ENCODE measurements at regions of chr11 and their contacts with region 1.

Region 1: GRCh38 chr11:65888163-65888814 is at the start of gene FIBP:
- DNase-seq: peak; percentile 97
- H3K4me3 Mint-ChIP-seq: peak within 1 kb of the TSS; percentile 90
- H3K27ac Mint-ChIP-seq: peak within 1 kb of the TSS; percentile 90
- H3K4me1 Mint-ChIP-seq: peaks cover 28% of the 10 kb centered on the region
- H3K27me3 Mint-ChIP-seq: no peaks in the 10 kb centered on the region
- CTCF ChIP-seq: peak; percentile 84
- total RNA-seq, gene FIBP: 79.8 and 80.8 TPM in 2 replicates

Region 2: DNA sequence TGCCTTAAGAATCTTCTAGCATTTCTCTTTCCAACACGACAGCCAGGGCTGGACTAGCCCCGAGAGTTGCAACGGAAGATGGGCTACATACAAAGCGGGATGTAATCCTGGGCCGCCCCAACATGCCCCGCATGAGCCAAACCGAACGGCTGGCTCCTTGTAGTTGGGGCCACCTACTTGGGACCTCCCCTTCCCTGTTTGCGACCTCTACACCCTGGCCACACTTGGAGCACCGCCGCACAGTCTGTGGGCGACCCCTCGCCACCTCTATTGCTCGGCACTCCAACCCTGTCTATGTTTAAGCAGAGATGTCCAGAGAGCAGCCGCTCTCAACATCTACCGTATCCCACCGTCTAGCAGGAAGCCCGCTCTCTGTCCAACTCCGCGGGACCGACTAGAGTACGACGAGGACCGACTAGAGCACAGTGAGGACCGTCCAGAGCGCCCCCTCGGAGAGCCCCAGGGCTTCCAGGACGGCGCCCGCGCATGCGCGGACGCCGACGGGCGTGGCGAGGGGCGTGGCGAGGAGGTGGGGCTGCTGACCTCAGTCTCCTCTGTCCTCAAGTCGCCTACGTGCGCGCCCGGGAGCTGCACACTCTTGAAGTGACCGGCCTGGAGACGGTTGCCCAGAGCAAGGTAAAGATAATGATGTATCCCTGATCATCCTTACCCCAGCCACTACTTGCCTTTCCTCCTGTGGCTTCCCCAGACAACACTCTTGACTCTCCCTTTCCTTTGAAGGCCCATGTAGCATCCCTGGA is 433.4 kb before region 1 on chr11:
- CTCF ChIA-PET with region 1: no interaction called
- POLR2A ChIA-PET with region 1: no interaction called
- intact Hi-C with region 1: no loop called
- DNase-seq: no peak
- H3K4me3 Mint-ChIP-seq: peak overlapping the region; percentile 66
- H3K27ac Mint-ChIP-seq: peak overlapping the region; percentile 27
- H3K4me1 Mint-ChIP-seq: peaks cover 9% of the 10 kb centered on the region
- H3K27me3 Mint-ChIP-seq: no peaks in the 10 kb centered on the region
- CTCF ChIP-seq: no peak

Region 3: GRCh38 chr11:65662799-65663638 is 225.3 kb before region 1 on chr11 and contains the start of gene RELA:
- CTCF ChIA-PET with region 1: interaction called, 3 read pairs
- POLR2A ChIA-PET with region 1: interaction called, 14 read pairs
- intact Hi-C with region 1: no loop called
- DNase-seq: peak; percentile 91
- H3K4me3 Mint-ChIP-seq: peak within 1 kb of the TSS; percentile 74
- H3K27ac Mint-ChIP-seq: peak within 1 kb of the TSS; percentile 73
- H3K4me1 Mint-ChIP-seq: peaks cover 12% of the 10 kb centered on the region
- H3K27me3 Mint-ChIP-seq: no peaks in the 10 kb centered on the region
- CTCF ChIP-seq: no peak
- total RNA-seq, gene RELA: 82.1 and 83.0 TPM in 2 replicates

Region 4: DNA sequence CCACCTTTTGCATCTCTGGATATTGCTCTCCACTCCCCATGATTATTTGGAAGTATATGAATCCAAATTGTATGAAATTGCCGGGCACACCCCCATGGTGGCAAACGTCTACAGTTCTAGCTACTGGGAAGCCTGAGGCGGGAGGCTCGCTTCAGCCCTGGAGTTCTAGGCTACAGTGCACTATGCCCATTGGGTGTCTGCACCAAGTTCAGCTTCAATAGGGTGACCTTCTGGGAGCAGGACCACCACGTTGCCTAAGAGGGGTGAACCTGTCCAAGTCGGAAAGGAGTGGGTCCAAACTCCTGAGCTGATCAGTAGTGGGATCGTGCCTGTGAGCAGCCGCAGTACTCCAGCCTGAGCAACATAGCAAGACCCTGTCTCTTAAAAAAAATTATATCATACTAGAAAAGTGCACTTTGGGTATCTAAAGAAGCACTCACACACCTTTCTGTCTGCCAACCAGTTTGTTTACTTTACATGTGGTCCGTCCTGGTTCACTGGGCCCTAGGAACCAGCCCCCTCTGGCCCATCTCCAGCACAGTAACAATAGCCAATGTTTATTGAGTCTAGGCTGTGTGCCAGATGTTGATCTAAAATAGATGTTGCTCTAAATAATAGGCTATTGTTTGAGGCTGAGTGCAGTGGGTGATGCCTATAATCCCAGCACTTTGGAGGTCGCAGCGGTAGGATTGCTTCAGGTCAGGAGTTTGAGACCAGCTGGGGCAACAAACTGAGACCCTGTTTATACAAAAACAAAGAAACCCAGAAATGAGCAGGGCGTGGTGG is 192.6 kb before region 1 on chr11:
- CTCF ChIA-PET with region 1: no interaction called
- POLR2A ChIA-PET with region 1: no interaction called
- intact Hi-C with region 1: no loop called
- DNase-seq: peak; percentile 61
- H3K4me3 Mint-ChIP-seq: no peak overlapping the region
- H3K27ac Mint-ChIP-seq: no peak overlapping the region
- H3K4me1 Mint-ChIP-seq: no peaks in the 10 kb centered on the region
- H3K27me3 Mint-ChIP-seq: peaks cover 30% of the 10 kb centered on the region
- CTCF ChIP-seq: no peak

Region 5: DNA sequence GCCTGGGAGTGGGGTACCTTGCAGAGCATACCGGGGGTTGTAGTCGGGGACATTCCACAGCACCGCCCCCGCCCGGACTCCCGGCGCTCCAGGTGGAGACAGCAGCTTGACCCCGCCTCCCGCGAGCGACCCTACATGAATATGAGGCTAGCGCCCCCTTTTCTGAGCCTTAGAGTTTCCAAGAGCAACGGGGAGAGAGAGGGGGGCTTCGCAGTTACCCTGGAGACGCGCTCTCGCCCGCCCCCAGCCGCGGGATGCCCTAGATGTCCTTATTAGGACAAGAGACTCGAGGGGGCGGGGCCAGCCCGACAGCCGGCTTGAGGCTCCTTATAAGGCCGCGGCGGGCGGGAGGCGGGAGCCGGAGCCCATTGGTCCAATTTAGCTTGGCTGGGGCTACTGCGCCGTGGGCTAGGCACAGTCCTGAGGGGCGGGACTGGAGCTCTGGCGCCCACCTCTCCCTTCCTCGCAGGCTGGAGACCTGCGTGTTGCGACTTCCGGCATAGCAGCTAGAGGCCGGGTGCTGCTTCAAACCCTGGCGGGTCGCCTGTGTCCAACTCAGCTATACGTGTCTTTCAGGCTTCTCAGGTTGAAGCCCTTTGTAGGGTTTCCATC is 29.0 kb before region 1 on chr11:
- CTCF ChIA-PET with region 1: interaction called, 64 read pairs
- POLR2A ChIA-PET with region 1: interaction called, 181 read pairs
- intact Hi-C with region 1: no loop called
- DNase-seq: peak; percentile 98
- H3K4me3 Mint-ChIP-seq: peak overlapping the region; percentile 83
- H3K27ac Mint-ChIP-seq: peak overlapping the region; percentile 93
- H3K4me1 Mint-ChIP-seq: peaks cover 32% of the 10 kb centered on the region
- H3K27me3 Mint-ChIP-seq: no peaks in the 10 kb centered on the region
- CTCF ChIP-seq: no peak

Region 6: GRCh38 chr11:65900125-65900898 is 12.0 kb after region 1 on chr11 and contains the start of gene FOSL1:
- CTCF ChIA-PET with region 1: interaction called, 55 read pairs
- POLR2A ChIA-PET with region 1: interaction called, 222 read pairs
- intact Hi-C with region 1: loop called (anchors 1 kb)
- DNase-seq: peak; percentile 97
- H3K4me3 Mint-ChIP-seq: peak within 1 kb of the TSS; percentile 96
- H3K27ac Mint-ChIP-seq: peak within 1 kb of the TSS; percentile 89
- H3K4me1 Mint-ChIP-seq: peaks cover 56% of the 10 kb centered on the region
- H3K27me3 Mint-ChIP-seq: no peaks in the 10 kb centered on the region
- CTCF ChIP-seq: no peak
- total RNA-seq, gene FOSL1: 95.3 and 124 TPM in 2 replicates

Region 7: DNA sequence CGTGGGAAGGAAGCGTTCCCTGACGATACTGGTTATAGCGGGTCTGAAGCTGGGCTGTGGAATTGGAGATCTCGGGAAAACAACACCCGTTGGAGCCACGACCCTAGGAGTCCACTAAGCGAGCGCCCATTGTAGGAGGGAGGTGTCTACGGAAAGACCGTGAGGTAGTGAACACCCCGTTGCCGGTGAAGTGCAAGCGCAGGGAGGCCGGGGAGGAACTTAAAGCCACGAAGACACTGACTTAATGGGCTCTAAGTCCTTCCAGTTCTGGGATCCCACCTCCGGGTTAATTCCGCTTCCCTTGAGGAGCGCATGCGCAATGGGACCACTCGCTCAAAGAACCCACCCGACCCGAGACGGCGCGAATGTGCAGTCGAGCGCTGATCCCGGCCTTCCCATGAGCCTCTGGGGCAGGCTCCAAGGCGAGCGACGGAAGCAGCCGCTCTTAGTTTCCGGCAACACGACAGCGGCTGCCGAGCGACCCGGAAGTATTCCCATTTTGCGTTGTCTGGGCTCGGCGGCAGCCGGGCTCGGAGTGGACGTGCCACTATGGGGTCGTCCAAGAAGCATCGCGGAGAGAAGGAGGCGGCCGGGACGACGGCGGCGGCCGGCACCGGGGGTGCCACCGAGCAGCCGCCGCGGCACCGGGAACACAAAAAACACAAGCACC is 73.1 kb after region 1 on chr11 and contains the start of gene SART1:
- CTCF ChIA-PET with region 1: interaction called, 12 read pairs
- POLR2A ChIA-PET with region 1: interaction called, 28 read pairs
- intact Hi-C with region 1: loop called (anchors 2 kb)
- DNase-seq: peak; percentile 96
- H3K4me3 Mint-ChIP-seq: peak within 1 kb of the TSS; percentile 96
- H3K27ac Mint-ChIP-seq: peak within 1 kb of the TSS; percentile 84
- H3K4me1 Mint-ChIP-seq: peaks cover 17% of the 10 kb centered on the region
- H3K27me3 Mint-ChIP-seq: no peaks in the 10 kb centered on the region
- CTCF ChIP-seq: no peak
- total RNA-seq, gene SART1: 61.7 and 67.4 TPM in 2 replicates

Region 8: DNA sequence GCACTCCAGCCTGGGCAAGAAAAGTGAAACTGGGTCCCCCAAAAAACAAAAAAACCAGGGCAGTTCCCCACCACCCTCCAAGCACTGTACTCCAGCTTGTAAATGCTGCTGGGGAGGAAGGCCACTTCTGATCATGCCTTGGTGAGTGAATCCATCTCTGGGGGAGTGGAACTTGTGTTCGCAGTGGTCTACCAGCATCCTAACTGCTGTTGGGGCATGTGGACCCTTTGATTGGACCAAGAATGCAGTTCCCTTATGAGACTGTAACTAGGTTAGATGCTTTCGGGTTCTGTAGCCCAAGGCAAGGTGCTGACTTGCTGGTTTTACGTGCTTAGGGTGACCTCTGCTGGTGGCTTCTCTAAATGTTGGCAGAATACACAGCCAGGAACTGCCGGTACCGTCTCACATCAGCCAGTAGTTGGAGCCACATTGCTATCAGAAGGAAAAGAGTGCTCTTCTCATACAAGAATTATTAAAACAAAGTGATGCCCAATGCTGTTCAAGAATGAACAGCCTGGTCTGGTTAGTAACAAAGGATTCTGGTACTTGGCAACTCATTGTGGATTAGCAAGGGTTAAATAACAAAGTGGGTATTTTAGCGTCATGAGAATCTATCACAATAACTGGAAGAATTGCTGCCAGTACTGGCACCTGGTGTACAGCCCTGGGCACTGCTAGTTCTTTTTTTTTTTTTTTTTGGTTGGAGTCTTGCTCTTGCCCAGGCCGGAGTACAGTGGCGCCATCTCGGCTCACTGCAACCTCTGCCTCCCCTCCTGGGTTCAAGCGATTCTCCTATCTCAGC is 100.7 kb after region 1 on chr11:
- CTCF ChIA-PET with region 1: interaction called, 203 read pairs
- POLR2A ChIA-PET with region 1: interaction called, 8 read pairs
- intact Hi-C with region 1: loop called (anchors 1 kb)
- DNase-seq: peak; percentile 96
- H3K4me3 Mint-ChIP-seq: no peak overlapping the region
- H3K27ac Mint-ChIP-seq: no peak overlapping the region
- H3K4me1 Mint-ChIP-seq: peaks cover 5% of the 10 kb centered on the region
- H3K27me3 Mint-ChIP-seq: no peaks in the 10 kb centered on the region
- CTCF ChIP-seq: peak; percentile 93

Region 9: GRCh38 chr11:66051766-66052663 is 163.7 kb after region 1 on chr11 and contains the start of gene SF3B2:
- CTCF ChIA-PET with region 1: interaction called, 5 read pairs
- POLR2A ChIA-PET with region 1: interaction called, 20 read pairs
- intact Hi-C with region 1: no loop called
- DNase-seq: peak; percentile 98
- H3K4me3 Mint-ChIP-seq: peak within 1 kb of the TSS; percentile 97
- H3K27ac Mint-ChIP-seq: peak within 1 kb of the TSS; percentile 91
- H3K4me1 Mint-ChIP-seq: peaks cover 5% of the 10 kb centered on the region
- H3K27me3 Mint-ChIP-seq: no peaks in the 10 kb centered on the region
- CTCF ChIP-seq: no peak
- total RNA-seq, gene SF3B2: 241 and 317 TPM in 2 replicates